PC-3 (cell line): ENCODE measurements at regions of chr11 and their contacts with region 1.

Region 1: GRCh38 chr11:46827995-46828394 is 18.1 kb downstream of the CKAP5 start:
- DNase-seq: no peak
- ATAC-seq: no peak
- H3K4me3 ChIP-seq: no peak overlapping the region
- H3K27ac ChIP-seq: no peak overlapping the region
- H3K4me1 ChIP-seq: peaks cover 13% of the 10 kb centered on the region
- H3K27me3 ChIP-seq: no peaks in the 10 kb centered on the region
- CTCF ChIP-seq: no peak

Region 2: GRCh38 chr11:46845740-46846509 is 17.9 kb after region 1 on chr11 and contains the start of gene CKAP5:
- CTCF ChIA-PET with region 1: no interaction called
- POLR2A ChIA-PET with region 1: interaction called, 4 read pairs
- intact Hi-C with region 1: loop called (anchors 1 kb)
- DNase-seq: peak; percentile 89
- ATAC-seq: peak; percentile 95
- H3K4me3 ChIP-seq: peak within 1 kb of the TSS; percentile 98
- H3K27ac ChIP-seq: peak within 1 kb of the TSS; percentile 35; the same call in 1 of the 2 replicates
- H3K4me1 ChIP-seq: peaks cover 14% of the 10 kb centered on the region; the same call in 1 of the 2 replicates
- H3K27me3 ChIP-seq: no peaks in the 10 kb centered on the region
- CTCF ChIP-seq: no peak
- total RNA-seq, gene CKAP5: 86.4 and 91.1 TPM in 2 replicates